PC-9 (cell line): ENCODE measurements at regions of chr2 and their contacts with region 1.

Region 1: GRCh38 chr2:54516842-54517241 is 60.7 kb downstream of the SPTBN1 start:
- DNase-seq: no peak
- H3K4me3 ChIP-seq: no peak overlapping the region
- H3K27ac ChIP-seq: no peak overlapping the region
- H3K4me1 ChIP-seq: peaks cover 9% of the 10 kb centered on the region; the same call in 1 of the 2 replicates
- H3K27me3 ChIP-seq: no peaks in the 10 kb centered on the region
- CTCF ChIP-seq: no peak

Region 2: DNA sequence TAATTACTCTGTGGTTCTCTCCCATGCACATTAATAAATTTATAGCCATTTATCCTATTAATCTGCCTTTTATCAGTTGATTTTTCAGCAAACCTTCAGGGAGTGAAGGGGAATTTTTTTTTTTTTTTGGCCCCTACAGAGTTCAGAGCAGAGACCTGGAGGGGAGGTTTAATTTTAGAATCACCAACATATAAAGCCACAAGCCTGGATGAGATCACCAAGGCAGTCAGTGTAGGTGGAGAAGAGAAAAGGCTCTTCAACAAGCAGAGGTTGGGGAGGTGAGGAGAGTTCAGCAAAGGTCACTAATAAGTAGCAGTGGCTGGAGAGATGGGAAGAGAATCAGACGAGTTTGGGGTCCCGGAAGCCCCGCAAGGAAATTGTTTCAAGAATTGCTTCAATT is 109.1 kb before region 1 on chr2:
- CTCF ChIA-PET with region 1: no interaction called
- POLR2A ChIA-PET with region 1: interaction called, 11 read pairs
- intact Hi-C with region 1: no loop called
- DNase-seq: no peak
- H3K4me3 ChIP-seq: no peak overlapping the region
- H3K27ac ChIP-seq: no peak overlapping the region
- H3K4me1 ChIP-seq: peaks cover 10% of the 10 kb centered on the region; the same call in 1 of the 2 replicates
- H3K27me3 ChIP-seq: no peaks in the 10 kb centered on the region
- CTCF ChIP-seq: no peak